AG04450 (cell line): ENCODE measurements at regions of chr1 and their contacts with region 1.

Region 1: DNA sequence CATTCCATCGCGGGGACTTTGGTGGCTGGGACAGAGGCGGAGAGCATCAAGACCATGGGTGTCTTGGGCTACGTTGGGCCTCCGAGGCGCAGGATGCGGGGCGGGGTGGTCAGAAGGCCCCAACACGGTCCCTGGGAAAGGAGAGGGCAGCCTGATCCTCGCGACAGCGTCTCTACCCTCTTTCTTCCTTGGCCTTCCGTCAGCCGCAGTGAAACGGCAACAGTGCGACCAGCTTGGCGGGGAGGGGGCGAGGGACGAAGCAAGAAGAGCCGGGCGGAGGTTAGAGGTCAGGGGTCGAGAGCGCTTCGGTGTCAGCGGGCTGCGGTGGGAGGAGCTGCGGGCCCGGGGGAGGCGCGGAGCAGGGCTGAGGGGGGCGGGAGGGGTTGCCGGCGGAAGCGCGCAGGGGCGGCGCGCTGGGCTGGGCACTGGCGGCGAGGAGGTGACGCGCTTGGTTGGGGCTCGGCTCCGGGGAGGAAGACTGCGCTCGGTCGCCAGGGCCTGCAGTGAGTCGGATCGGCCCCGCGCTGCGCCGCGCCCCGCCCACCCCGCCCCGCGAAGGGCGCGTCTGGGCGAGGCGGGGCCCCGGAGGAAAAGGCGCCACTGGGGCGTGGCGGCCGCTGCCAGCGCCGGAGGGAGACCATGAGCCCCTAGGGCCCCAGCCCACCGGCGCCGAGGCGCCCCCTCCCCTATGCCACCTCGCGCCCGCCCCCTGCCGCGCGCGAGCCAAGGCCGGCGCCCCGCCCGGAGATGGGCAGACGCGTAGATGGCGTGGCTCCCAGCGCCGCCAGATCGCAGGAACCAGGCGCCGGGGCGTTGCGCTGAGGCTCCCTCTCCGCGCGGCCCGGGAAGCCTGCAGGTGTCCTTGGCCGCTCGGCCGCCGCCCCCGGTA is at the start of gene KCNC4:
- DNase-seq: no peak
- H3K4me3 ChIP-seq: peak within 1 kb of the TSS; percentile 60
- H3K27ac ChIP-seq: no peak within 1 kb of the TSS
- H3K27me3 ChIP-seq: peaks cover 28% of the 10 kb centered on the region
- CTCF ChIP-seq: no peak
- polyA plus RNA-seq, gene KCNC4: 0.36 and 0.63 TPM in 2 replicates

Region 2: GRCh38 chr1:110196917-110197765 is 12.8 kb before region 1 on chr1:
- CTCF ChIA-PET with region 1: interaction called, 57 read pairs
- POLR2A ChIA-PET with region 1: no interaction called
- DNase-seq: no peak
- H3K4me3 ChIP-seq: no peak overlapping the region
- H3K27ac ChIP-seq: no peak overlapping the region
- H3K27me3 ChIP-seq: peaks cover 3% of the 10 kb centered on the region
- CTCF ChIP-seq: peak; percentile 97

Region 3: GRCh38 chr1:110312188-110313121 is 102.5 kb after region 1 on chr1:
- CTCF ChIA-PET with region 1: interaction called, 1,035 read pairs
- POLR2A ChIA-PET with region 1: interaction called, 4 read pairs
- DNase-seq: peak; percentile 51
- H3K4me3 ChIP-seq: no peak overlapping the region
- H3K27ac ChIP-seq: no peak overlapping the region
- H3K27me3 ChIP-seq: no peaks in the 10 kb centered on the region
- CTCF ChIP-seq: peak; percentile 99

Region 4: DNA sequence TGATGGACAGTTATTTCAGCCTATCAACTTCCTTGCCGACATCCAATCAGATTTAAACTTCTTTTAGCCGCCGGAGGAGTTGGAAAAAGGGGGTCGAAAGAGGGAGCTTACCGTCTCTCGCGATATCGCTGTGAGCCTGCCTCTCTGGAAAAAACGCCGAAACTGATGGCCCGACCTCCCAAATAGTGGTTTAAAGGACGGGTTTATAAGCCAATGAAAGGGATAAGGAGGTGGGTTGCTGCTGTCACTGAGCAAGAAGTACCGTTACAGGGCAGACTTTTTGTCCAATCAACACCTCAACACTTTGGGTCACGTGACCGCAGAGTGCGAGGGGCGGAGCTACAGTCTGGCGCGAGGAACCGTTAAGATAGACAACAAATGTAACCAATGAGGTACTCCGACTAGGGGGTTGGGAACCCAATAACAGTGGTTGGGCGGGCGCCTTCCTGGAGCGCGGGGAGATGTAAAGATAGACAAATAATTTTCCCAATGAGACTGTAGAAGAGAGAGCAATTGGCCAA is 129.0 kb after region 1 on chr1 and contains the start of gene RBM15:
- CTCF ChIA-PET with region 1: interaction called, 86 read pairs
- POLR2A ChIA-PET with region 1: interaction called, 5 read pairs
- DNase-seq: peak; percentile 100
- H3K4me3 ChIP-seq: peak within 1 kb of the TSS; percentile 98
- H3K27ac ChIP-seq: peak within 1 kb of the TSS; percentile 99
- H3K27me3 ChIP-seq: no peaks in the 10 kb centered on the region
- CTCF ChIP-seq: no peak
- polyA plus RNA-seq, gene RBM15: 8.9 and 9.6 TPM in 2 replicates

Region 5: DNA sequence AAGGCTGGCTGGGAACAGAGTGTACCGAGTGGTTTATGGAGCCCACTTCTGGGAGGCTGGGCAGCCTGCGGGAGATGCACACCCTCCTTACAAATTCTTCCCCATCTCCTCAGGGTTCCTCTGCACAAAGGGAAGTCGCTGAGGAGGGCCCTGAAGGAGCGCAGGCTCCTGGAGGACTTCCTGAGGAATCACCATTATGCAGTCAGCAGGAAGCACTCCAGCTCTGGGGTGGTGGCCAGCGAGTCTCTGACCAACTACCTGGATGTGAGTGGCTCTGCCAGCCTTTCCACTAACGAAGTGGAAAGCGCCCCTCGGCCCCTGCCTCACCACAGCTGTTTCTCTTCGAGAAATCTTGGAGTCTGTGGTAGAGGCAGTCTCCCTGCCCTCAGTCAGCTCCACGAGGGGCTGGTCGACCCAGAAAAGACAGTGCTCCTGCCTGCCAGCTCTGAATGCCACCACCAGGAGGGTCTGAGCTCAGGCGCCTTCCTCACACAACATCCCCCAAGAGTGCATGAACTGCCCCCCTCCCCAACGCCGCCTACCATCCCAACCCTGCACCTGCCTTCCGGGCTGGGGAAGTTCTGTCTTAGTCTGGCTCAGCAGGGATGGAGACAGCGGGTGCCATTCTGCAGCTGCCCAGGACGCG is 272.8 kb after region 1 on chr1:
- CTCF ChIA-PET with region 1: interaction called, 10 read pairs
- POLR2A ChIA-PET with region 1: no interaction called
- DNase-seq: no peak
- H3K4me3 ChIP-seq: no peak overlapping the region
- H3K27ac ChIP-seq: no peak overlapping the region
- H3K27me3 ChIP-seq: peaks cover 21% of the 10 kb centered on the region
- CTCF ChIP-seq: no peak